ENCODE measurements at regions of chr3 and their contacts with region 1.

Region 1: DNA sequence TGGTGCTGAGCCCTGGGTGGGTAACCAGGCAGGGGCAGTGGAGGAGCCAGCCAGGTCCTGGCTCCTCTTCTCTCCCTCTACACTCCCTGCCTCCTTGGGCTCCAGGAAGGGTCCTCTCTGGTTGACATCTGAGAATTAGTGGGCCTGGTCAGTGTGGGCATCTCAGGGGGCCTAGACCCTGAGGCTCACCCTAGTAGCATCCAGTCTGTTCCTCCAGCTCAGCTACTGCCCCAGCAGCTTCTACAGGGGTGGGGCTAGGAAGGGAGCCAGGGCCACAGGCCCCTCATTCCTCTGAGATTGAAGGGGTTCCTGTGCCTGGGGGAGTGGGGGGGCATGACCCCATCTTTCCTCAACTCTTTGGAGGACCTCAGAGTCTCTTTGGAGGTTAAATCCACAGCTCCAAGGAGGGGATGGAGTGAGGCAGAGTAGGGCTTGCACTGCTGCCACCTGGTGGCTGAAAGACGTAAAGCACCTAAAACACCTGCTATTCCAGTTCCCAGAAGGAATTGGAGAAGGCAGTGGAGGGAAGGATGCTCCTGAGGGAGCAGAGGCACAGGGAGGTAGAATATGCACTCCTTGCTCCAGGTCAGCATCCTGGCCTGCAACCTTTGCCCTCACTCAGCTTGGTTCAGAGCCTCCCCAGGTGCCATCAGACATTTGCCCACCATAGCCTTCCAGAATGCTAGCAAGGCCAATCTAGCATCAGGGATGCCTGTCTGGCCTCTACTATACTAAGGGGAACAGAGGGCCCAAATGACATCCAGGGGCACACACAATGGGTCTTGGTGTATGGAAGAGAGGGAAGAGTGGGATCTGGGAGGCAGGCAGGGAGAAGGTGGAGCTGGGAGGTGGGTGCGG is 25.1 kb downstream of the C3orf18 start:
- DNase-seq: no peak
- ATAC-seq: peak; percentile 66

Region 2: DNA sequence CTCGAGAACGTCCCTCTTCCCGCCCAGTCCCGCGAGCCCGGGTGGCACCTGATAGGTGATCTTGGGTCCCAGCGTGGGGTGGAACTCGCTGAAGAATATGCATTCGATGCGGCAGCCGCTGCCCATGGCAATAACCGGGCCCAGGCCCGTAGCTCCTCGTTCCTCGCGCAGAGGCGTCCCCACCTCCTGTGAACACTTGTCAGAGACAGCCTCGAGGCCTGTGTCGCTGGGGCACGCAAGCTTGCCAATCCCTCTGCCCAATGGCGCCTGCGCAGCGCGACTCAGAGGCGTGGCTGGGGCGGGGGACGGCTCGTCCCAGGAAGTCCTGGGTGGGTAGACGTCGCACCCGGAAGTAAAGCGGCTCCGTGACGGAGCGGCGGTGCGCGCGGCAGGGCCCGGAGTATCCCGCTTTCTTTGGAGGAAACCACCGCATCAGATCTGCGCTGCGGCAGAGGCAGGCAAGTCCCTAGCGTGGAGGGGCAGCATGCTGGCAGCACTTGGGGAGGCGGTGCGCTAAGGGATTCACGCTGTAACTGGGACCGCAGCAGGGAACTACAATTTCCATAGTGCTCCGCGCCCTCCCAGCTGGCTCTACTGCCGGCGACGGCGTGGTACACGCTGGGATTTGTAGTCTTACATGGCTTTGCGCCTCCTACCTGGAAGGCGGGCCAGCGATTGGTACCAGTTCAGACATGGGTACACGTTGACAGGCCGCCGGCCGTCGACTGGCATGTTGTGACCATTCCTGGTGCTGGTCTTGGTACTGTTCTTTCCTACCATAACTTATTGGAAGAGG is 191.7 kb before region 1 on chr3 and contains the starts of genes CYB561D2 and NPRL2:
- intact Hi-C with region 1: loop called (anchors 1 kb)
- DNase-seq: peak; percentile 99
- ATAC-seq: peak; percentile 95
- total RNA-seq, gene CYB561D2: 6.3 TPM
- total RNA-seq, gene NPRL2: 16.7 TPM

Region 3: DNA sequence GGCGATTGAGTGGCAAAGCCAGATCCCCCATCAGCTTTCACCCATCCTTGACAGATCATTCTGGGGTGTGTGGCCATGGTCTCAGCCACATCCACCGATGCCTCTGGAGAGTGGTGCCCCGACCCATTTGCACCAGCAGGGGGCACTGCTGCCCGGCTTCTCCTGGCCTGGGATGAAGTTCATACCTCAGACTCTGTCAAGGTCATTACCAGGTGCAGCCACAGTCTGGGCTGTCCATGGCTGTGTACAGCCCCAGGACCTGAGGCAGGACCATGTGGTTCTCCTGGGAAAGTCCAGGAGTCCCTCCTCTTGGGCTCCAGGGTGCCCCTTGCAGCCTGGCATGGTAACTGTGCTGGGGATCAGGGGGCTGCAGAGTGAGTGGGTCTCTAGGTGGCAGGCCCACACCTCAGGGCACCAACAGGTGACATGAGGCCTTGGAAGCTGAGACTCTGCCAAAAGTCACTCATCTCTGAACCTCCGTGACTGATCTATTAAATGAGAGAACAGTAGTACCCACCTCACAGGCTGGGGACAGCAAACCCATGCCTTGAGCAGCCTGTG is 106.2 kb before region 1 on chr3:
- intact Hi-C with region 1: loop called (anchors 1 kb)
- DNase-seq: no peak
- ATAC-seq: peak; percentile 77

Measured in Right ventricle myocardium inferior (tissue), 1 donor.